SK-N-SH (cell line): ENCODE measurements at regions of chr1 and their contacts with region 1.

Region 1: DNA sequence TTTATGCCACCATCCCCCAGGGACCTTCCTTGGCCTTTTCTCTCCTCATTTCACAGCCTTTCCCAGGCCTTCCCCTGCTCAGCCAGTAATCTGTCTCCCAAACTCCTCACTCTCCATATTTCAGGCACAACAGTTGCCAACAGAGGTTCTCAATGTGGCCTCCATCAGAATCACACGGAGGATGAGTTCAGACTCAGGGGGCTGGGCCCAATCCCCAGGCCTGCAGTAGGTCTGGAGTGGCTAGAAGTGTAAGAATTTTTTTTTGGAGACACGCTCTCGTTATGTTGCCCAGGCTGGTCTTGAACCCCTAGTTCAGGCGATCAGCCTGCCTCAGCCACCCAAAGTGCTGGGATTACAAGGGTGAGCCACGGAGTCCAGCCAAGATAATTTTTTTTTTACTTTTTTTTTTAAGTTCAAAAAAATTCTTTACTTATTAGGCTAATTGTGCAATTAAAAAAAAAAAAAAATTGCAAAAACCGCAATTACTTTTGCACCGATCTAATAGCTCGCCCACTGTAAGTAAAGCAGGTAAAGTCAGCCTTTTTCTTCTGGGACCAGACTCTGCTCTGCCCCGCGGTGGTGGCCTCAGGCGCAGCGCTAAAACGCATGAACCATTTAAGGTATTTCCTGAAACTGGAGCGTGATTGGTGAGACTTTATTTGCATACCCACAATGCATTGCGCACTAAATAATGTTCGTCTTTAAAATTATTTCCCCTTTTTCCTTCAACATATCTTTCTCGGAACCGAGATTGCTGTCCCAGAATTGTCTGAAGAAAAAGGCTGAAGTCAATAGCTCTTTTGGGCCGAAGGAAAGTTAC is 18.7 kb downstream of the KIAA2013 start:
- DNase-seq: peak; percentile 85
- H3K4me3 ChIP-seq: peak overlapping the region in 1 of 2 experiments; percentile 1; a peak in 1 of 4 replicates
- H3K27ac ChIP-seq: peak overlapping the region; percentile 95 to 98
- H3K4me1 ChIP-seq: peaks cover 0 to 3% of the 10 kb centered on the region in 2 experiments; a peak in 1 of 4 replicates
- H3K27me3 ChIP-seq: no peaks in the 10 kb centered on the region
- CTCF ChIP-seq: peak; percentile 74
- EP300 ChIP-seq: no peak
- RAD21 ChIP-seq: peak; percentile 64

Region 2: GRCh38 chr1:11838349-11839272 is 68.9 kb before region 1 on chr1:
- CTCF ChIA-PET with region 1: interaction called, 316 read pairs
- POLR2A ChIA-PET with region 1: interaction called, 34 read pairs
- DNase-seq: peak; percentile 93
- H3K4me3 ChIP-seq: peak overlapping the region in 1 of 2 experiments; percentile 36; a peak in 1 of 4 replicates
- H3K27ac ChIP-seq: no peak overlapping the region; a peak in 1 of 4 replicates
- H3K4me1 ChIP-seq: peaks cover 0 to 26% of the 10 kb centered on the region in 2 experiments; a peak in 2 of 4 replicates
- H3K27me3 ChIP-seq: no peaks in the 10 kb centered on the region
- CTCF ChIP-seq: peak; percentile 97
- EP300 ChIP-seq: no peak
- RAD21 ChIP-seq: peak; percentile 99

Region 3: DNA sequence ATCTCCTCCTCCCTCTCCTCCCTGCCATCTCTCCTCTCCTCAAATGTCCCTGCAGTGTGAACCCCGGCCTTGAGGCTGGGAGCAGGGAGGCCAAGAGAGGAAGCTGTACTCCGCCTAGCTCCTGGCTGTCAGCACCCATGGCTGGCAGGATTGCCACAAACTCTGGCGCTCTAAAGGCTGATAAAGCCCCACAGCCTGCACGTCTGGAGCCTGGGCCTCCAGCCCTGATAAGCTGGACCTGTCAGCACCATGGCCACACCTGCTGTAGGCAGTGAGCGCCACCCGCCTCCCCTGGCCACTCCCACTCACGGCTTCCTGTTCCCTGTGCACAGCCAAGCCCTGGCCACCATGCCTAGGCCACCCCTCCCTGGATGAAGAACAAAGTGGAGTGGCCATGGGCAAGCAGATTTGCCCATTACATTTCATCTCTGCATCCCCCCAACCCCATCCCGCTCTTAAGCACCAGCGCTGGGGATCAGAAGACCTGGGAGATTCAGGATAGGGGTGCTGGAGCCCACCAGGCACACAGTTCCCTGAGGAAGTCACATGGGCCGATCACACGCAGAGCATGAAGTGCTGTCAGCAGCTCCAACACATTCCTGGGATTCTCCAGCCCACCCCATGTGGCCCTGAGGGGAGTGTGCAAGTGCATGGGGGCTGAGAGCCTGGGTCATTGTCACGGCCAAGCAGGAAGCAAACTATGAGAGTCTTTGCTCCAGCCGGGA is 24.5 kb before region 1 on chr1:
- CTCF ChIA-PET with region 1: interaction called, 7 read pairs
- POLR2A ChIA-PET with region 1: interaction called, 14 read pairs
- DNase-seq: peak; percentile 78
- H3K4me3 ChIP-seq: no peak overlapping the region
- H3K27ac ChIP-seq: peak overlapping the region in 1 of 2 experiments; percentile 99; a peak in 2 of 4 replicates
- H3K4me1 ChIP-seq: peaks cover 0 to 57% of the 10 kb centered on the region in 2 experiments; a peak in 2 of 4 replicates
- H3K27me3 ChIP-seq: no peaks in the 10 kb centered on the region
- CTCF ChIP-seq: no peak
- EP300 ChIP-seq: peak in 1 of 2 experiments; percentile 51; a peak in 2 of 4 replicates
- RAD21 ChIP-seq: no peak

Region 4: GRCh38 chr1:11925938-11926292 is 18.4 kb after region 1 on chr1:
- CTCF ChIA-PET with region 1: interaction called, 8 read pairs
- POLR2A ChIA-PET with region 1: interaction called, 60 read pairs
- DNase-seq: no peak
- H3K4me3 ChIP-seq: peak overlapping the region; percentile 61 to 75; a peak in 3 of 4 replicates
- H3K27ac ChIP-seq: 0 out of 4 replicates have a peak overlapping the region, but pooled peaks of 1 of the 2 experiments have one; percentile 30
- H3K4me1 ChIP-seq: peaks cover 22 to 32% of the 10 kb centered on the region in 2 experiments; a peak in 3 of 4 replicates
- H3K27me3 ChIP-seq: no peaks in the 10 kb centered on the region
- CTCF ChIP-seq: no peak
- EP300 ChIP-seq: no peak
- RAD21 ChIP-seq: no peak

Region 5: GRCh38 chr1:11940260-11940921 is 32.9 kb after region 1 on chr1:
- CTCF ChIA-PET with region 1: interaction called, 5 read pairs
- POLR2A ChIA-PET with region 1: interaction called, 49 read pairs
- DNase-seq: peak; percentile 90
- H3K4me3 ChIP-seq: no peak overlapping the region
- H3K27ac ChIP-seq: peak overlapping the region in 1 of 2 experiments; percentile 90; a peak in 2 of 4 replicates
- H3K4me1 ChIP-seq: peaks cover 12 to 63% of the 10 kb centered on the region in 2 experiments; a peak in 3 of 4 replicates
- H3K27me3 ChIP-seq: no peaks in the 10 kb centered on the region
- CTCF ChIP-seq: no peak
- EP300 ChIP-seq: peak in 1 of 2 experiments; percentile 90; a peak in 2 of 4 replicates
- RAD21 ChIP-seq: peak; percentile 30

Region 6: DNA sequence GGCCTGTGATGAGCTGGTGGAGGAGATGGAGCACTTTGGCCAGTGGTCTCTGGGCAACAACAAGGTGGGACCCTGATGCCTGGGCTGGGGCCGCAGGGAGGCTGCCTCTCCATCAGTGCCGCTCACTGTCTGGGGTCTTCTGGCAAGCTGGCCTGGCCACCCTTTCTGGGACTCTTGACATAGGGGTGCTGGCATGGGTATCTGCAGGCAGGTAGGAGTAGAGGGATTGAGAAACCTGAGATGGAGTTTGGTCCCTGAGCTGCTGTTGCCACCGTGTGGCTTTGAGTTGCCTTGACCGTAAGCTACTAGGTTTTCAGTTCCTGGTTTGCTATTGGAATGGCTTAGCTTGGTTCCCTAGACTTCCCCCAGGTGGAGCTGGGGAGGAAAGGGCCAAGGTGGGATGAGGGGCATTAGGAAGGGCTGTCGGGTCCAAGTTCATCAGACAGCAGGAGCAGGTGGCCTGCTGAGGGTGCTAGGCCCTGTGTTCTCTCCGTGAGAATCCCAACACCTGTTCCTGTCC is 59.6 kb after region 1 on chr1:
- CTCF ChIA-PET with region 1: interaction called, 16 read pairs
- POLR2A ChIA-PET with region 1: interaction called, 26 read pairs
- DNase-seq: peak; percentile 69
- H3K4me3 ChIP-seq: no peak overlapping the region
- H3K27ac ChIP-seq: no peak overlapping the region
- H3K4me1 ChIP-seq: no peaks in the 10 kb centered on the region
- H3K27me3 ChIP-seq: no peaks in the 10 kb centered on the region
- CTCF ChIP-seq: peak; percentile 36
- EP300 ChIP-seq: no peak
- RAD21 ChIP-seq: peak; percentile 80

Region 7: GRCh38 chr1:12019858-12020509 is 112.5 kb after region 1 on chr1:
- CTCF ChIA-PET with region 1: no interaction called
- POLR2A ChIA-PET with region 1: interaction called, 19 read pairs
- DNase-seq: no peak
- H3K4me3 ChIP-seq: peak overlapping the region; percentile 70 to 94
- H3K27ac ChIP-seq: peak overlapping the region; percentile 39 to 62; a peak in 3 of 4 replicates
- H3K4me1 ChIP-seq: no peaks in the 10 kb centered on the region; a peak in 1 of 4 replicates
- H3K27me3 ChIP-seq: no peaks in the 10 kb centered on the region
- CTCF ChIP-seq: no peak
- EP300 ChIP-seq: no peak
- RAD21 ChIP-seq: no peak